Panc1 (cell line): ENCODE measurements at regions of chr12 and their contacts with region 1.

Region 1: DNA sequence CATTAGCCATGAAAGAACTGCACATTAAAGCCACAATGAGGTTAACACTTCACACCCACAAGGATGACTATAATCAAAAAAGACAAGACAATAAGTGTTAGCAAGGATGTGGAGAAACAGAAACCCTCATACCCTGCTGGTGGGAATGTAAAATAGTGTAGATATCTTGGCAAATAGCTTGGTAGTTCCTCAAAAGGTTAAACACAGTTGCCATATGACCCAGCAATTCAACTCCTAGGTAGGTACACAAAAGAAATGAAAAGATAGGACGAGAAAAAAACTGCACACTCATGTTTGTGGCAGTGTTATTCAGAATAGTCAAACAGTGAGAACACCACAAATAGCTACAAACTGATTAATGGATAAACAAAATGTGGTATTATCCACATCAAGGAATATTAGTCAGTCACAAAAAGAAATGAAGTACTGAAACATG is 93.5 kb downstream of the ATXN2 start:
- DNase-seq: no peak
- ATAC-seq: no peak
- H3K4me3 ChIP-seq: no peak overlapping the region
- H3K27ac ChIP-seq: no peak overlapping the region
- H3K4me1 ChIP-seq: no peaks in the 10 kb centered on the region
- H3K27me3 ChIP-seq: no peaks in the 10 kb centered on the region
- CTCF ChIP-seq: no peak

Region 2: GRCh38 chr12:111523587-111524167 is 18.1 kb after region 1 on chr12:
- CTCF ChIA-PET with region 1: interaction called, 6 read pairs
- POLR2A ChIA-PET with region 1: no interaction called
- in situ Hi-C with region 1: no loop called
- intact Hi-C with region 1: loop called (anchors 2 kb)
- DNase-seq: no peak
- ATAC-seq: no peak
- H3K4me3 ChIP-seq: no peak overlapping the region
- H3K27ac ChIP-seq: no peak overlapping the region
- H3K4me1 ChIP-seq: no peaks in the 10 kb centered on the region; the same call in 1 of the 2 replicates
- H3K27me3 ChIP-seq: no peaks in the 10 kb centered on the region
- CTCF ChIP-seq: no peak

Region 3: DNA sequence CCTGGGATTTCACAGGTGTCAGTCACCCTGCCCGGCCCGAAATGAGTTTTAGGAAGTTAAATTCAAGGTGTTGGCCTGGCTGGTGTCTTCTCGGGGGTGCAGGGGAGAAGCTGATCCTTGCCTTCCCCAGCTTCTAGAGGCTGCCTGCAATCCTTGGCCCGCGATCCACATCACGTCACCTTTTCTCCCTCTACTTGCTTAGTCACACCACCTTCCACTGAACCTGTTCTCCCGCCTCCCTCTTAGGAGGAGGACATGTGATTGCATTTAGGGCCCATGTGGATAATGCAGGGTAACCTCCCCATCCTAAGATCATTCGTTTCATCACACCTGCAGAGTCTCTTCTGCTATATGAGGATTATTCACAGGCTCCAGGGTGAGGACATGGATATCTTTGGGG is 118.9 kb after region 1 on chr12:
- CTCF ChIA-PET with region 1: no interaction called
- POLR2A ChIA-PET with region 1: interaction called, 15 read pairs
- in situ Hi-C with region 1: no loop called
- intact Hi-C with region 1: no loop called
- DNase-seq: no peak
- ATAC-seq: peak; percentile 28; the same call in 1 of the 2 replicates
- H3K4me3 ChIP-seq: no peak overlapping the region
- H3K27ac ChIP-seq: no peak overlapping the region
- H3K4me1 ChIP-seq: no peaks in the 10 kb centered on the region
- H3K27me3 ChIP-seq: no peaks in the 10 kb centered on the region
- CTCF ChIP-seq: no peak

Region 4: DNA sequence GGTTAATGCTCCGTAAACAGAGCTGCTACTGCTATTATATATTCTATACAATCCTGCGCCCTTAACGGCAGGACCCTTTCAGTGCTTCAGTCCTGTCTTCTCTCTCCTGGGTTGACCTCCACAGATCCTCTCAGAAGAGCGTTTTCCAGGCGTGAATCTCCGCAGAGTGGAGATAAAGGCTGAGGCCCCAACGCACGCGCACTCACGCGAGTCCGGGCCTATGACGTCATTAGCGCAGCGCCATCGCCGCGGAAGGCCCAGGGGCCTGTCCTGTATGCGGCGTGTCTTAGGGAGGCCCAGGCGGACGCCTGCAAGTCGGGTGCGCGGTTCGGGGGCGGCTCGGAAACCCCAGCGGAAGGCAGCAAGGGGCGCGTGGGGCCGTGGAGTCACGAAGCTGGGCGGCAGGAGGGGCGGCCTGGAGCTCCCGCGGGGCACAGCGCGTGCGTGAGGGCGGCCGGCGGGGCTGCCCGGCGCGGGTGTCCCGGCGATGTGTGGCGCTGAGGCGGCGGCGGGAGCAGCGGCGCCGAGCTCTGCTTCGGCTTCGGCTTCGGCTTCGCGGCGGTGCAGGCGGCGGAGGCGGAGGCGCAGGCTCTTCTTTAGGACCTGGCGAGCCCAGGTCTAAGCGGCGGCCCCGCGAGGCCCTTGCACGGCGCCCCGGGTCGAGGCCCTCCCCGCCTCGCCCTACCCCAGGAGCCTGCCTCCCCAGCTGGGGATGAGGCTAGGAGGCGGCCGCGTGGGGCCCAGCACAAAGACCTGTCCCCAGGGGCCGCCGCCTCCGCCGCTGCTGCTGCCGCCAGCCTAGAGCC is 336.3 kb after region 1 on chr12 and contains the start of gene MAPKAPK5:
- CTCF ChIA-PET with region 1: no interaction called
- POLR2A ChIA-PET with region 1: no interaction called
- in situ Hi-C with region 1: no loop called
- intact Hi-C with region 1: no loop called
- DNase-seq: peak; percentile 61
- ATAC-seq: peak; percentile 95
- H3K4me3 ChIP-seq: peak within 1 kb of the TSS; percentile 97 to 99
- H3K27ac ChIP-seq: peak within 1 kb of the TSS; percentile 99
- H3K4me1 ChIP-seq: peaks cover 12% of the 10 kb centered on the region; the same call in 1 of the 2 replicates
- H3K27me3 ChIP-seq: no peaks in the 10 kb centered on the region
- CTCF ChIP-seq: no peak
- total RNA-seq, gene MAPKAPK5: 49.7 TPM